ENCODE measurements at regions of chr18 and their contacts with region 1.

Region 1: GRCh38 chr18:49561289-49562193 is at the start of gene LIPG:
- DNase-seq: peak; percentile 77
- H3K4me3 Mint-ChIP-seq: peak within 1 kb of the TSS; percentile 54
- H3K27ac Mint-ChIP-seq: no peak within 1 kb of the TSS
- H3K4me1 Mint-ChIP-seq: peaks cover 31% of the 10 kb centered on the region
- H3K27me3 Mint-ChIP-seq: peaks cover 62% of the 10 kb centered on the region
- total RNA-seq, gene LIPG: 0.17 to 0.50 TPM

Region 2: DNA sequence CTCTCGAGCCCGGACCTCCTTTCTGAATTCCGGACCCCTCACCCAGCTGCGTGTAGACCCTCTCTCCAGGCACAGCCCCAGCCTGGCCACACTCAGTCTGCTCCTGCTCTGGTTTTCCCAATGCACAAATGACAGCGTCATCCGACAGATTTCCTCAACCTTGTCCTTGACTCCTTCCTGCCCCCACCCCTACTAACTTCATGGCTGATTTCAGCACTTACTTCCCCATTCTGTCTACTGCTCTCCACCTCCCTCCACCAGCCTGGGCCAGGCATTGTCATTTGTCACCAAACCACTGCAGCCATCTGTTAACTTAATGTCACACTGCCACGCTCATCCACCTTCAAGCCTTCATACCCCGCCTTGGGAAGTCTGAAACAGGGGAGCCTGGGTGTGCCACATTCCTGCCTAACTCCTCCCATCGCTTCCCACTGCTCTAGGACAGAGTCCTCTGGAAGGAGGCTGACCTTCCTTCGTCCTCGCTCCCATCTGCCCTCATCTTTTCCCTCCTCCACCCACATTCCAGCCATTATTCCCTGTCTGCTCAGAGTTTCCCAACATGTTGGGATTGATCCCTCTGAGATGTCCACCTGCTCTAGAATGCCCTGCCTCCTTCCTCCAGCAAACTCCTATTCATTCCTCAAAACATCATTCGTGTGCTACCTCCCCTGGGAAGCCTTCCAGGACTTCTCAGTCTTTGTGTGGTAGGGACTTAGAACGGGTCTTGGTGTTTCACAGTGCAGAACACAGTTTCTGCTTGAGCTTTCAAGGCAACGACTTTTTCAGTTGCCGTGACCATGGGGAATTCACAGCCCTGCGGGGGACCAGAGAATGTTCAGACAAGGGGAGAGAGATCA is 568.6 kb before region 1 on chr18:
- CTCF ChIA-PET with region 1: no interaction called
- POLR2A ChIA-PET with region 1: no interaction called
- intact Hi-C with region 1: no loop called
- DNase-seq: no peak
- H3K4me3 Mint-ChIP-seq: no peak overlapping the region
- H3K27ac Mint-ChIP-seq: no peak overlapping the region
- H3K4me1 Mint-ChIP-seq: peaks cover 15% of the 10 kb centered on the region
- H3K27me3 Mint-ChIP-seq: no peaks in the 10 kb centered on the region

Region 3: GRCh38 chr18:49723648-49724180 is 162.2 kb after region 1 on chr18:
- CTCF ChIA-PET with region 1: no interaction called
- POLR2A ChIA-PET with region 1: no interaction called
- intact Hi-C with region 1: loop called (anchors 5 kb)
- DNase-seq: peak; percentile 50
- H3K4me3 Mint-ChIP-seq: no peak overlapping the region
- H3K27ac Mint-ChIP-seq: no peak overlapping the region
- H3K4me1 Mint-ChIP-seq: peaks cover 10% of the 10 kb centered on the region
- H3K27me3 Mint-ChIP-seq: peaks cover 14% of the 10 kb centered on the region

Measured in activated CD4-positive, alpha-beta memory T cell treated with anti-CD3 and anti-CD28 coated beads for 36 hours (primary cell).